Ovary (tissue), 10 donors: ENCODE measurements at regions of chr3 and their contacts with region 1.

Region 1: DNA sequence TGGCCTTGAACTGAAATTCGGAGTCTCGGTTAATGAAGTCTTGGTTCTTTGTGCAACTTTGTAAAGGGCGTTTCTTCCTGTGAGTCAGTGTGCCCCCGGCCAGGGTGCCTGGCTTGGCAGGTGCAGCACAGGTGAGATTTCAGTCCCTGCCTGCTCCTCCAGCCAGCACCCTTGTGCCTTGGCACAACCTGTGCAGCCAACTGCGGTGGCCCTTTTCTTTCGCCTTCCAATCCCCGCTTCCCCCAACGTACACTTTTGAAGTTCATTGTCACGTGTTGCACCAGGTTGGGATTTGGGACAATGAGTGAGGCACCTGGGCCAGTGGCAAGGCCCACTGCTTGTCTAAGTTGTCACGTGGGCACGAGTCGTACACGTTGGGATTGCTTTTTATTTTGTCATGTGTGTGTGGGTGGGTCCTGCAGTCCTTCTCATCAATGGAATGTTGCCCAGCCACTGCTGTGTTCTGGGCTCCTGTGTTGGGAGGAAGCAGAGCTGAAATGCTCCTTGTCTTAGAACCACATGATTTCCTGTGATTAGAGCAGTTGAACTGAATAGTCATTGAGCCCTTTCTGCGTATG is 242.9 kb upstream of the BHLHE40 start:
- DNase-seq: no peak
- H3K4me3 ChIP-seq: no peak overlapping the region
- H3K27ac ChIP-seq: no peak overlapping the region
- H3K4me1 ChIP-seq: peaks cover 4% of the 10 kb centered on the region
- H3K27me3 ChIP-seq: no peaks in the 10 kb centered on the region
- CTCF ChIP-seq: no peak
- EP300 ChIP-seq: no peak
- POLR2A ChIP-seq: no peak

Region 2: GRCh38 chr3:4786431-4786830 is 50.1 kb after region 1 on chr3:
- intact Hi-C with region 1: loop called in 1 of 4 experiments (anchors 10 kb)
- DNase-seq: no peak
- H3K4me3 ChIP-seq: no peak overlapping the region
- H3K27ac ChIP-seq: no peak overlapping the region
- H3K4me1 ChIP-seq: no peaks in the 10 kb centered on the region
- H3K27me3 ChIP-seq: no peaks in the 10 kb centered on the region
- CTCF ChIP-seq: no peak
- EP300 ChIP-seq: no peak
- POLR2A ChIP-seq: no peak

Region 3: DNA sequence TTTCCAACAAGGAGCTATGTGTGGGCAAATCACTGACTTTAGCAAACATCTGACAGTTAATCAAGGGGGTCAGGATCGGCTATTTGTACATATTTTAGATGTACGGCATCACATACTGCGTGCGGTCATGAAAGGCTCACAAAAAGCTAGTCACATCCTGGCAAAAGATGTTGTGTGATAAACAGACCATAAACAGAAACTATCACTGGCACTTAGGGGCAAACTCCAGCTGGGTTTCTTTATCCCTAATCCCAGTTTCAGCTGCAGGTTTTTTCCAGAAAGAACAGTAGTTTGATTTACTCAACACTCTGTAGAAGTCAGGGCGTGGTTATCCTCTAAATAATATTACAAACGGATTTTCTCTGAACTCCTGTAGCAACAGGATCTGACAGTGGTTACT is 130.5 kb after region 1 on chr3:
- intact Hi-C with region 1: no loop called
- DNase-seq: peak in 1 of 5 donors; percentile 26
- H3K4me3 ChIP-seq: no peak overlapping the region
- H3K27ac ChIP-seq: peak overlapping the region in 1 of 2 donors; percentile 94
- H3K4me1 ChIP-seq: peaks cover 6% of the 10 kb centered on the region
- H3K27me3 ChIP-seq: no peaks in the 10 kb centered on the region
- CTCF ChIP-seq: no peak
- EP300 ChIP-seq: no peak
- POLR2A ChIP-seq: no peak

Region 4: GRCh38 chr3:4906107-4906621 is 169.8 kb after region 1 on chr3:
- intact Hi-C with region 1: no loop called
- DNase-seq: no peak
- H3K4me3 ChIP-seq: no peak overlapping the region
- H3K27ac ChIP-seq: no peak overlapping the region
- H3K4me1 ChIP-seq: peaks cover 2% of the 10 kb centered on the region
- H3K27me3 ChIP-seq: no peaks in the 10 kb centered on the region
- CTCF ChIP-seq: no peak
- EP300 ChIP-seq: no peak
- POLR2A ChIP-seq: no peak

Region 5: DNA sequence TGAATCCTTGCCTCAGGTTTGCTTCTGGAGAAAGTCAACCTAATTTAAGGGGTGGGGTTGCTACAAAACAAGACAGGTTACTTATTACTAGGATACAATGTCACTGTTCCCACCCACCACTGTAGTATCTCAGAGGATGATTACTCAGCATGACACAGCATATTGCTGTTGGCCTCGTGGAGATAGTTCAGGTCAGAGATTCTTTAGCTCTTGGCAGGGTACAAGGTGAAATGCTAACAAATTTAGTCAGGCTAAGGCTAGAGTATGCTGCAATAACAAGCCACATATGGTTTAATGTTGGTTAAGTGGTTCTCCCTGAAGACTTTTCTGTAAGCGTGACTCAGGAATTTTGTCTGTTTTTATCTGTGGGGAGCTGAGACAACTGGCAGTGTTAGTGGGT is 613.0 kb after region 1 on chr3:
- intact Hi-C with region 1: no loop called
- DNase-seq: no peak
- H3K4me3 ChIP-seq: no peak overlapping the region
- H3K27ac ChIP-seq: no peak overlapping the region
- H3K4me1 ChIP-seq: no peaks in the 10 kb centered on the region
- H3K27me3 ChIP-seq: no peaks in the 10 kb centered on the region
- CTCF ChIP-seq: no peak
- EP300 ChIP-seq: no peak
- POLR2A ChIP-seq: no peak